ENCODE measurements at regions of chr3 and their contacts with region 1.

Region 1: DNA sequence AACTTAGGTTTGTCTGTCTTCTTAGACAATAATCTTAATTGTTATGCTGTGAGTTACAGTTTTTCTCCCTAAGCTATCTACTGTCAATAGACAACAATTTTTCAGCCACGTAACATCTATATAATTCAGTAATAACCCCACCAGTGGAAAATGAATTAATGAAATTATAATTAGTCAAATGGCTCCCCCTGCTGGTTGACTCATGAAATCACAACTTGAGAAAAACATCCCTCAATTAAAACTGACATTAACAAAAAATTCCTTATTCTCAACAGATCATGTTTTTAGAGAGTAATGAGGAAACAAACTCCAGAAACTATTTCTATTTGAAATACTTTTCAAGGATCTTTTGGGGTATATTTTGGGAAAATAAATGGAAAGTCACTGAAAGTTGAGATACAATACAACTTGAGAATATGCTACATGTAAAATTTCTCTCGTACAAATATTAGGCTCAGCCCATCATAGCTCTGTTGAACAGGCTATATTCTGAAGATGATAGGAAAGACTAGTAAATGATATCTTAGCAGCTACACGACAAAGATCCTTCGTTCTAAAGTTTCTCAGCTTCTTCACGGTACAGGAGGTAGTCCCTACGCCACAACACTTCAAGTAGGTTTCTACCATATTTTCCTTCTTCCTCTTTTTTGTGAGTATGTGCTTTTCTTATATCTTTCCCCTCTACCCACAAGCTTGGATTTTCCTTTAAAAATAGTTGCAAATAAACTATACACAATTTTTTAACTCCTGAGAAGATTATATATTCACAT is 20.7 kb downstream of the PPP1R2 start:
- DNase-seq: no peak
- H3K4me3 ChIP-seq: no peak overlapping the region
- H3K27ac ChIP-seq: peak overlapping the region in 2 of 8 donors; percentile 23 to 27
- H3K4me1 ChIP-seq: peaks cover 4 to 47% (median 31%) of the 10 kb centered on the region in 6 donors
- H3K27me3 ChIP-seq: no peaks in the 10 kb centered on the region
- CTCF ChIP-seq: peak; percentile 65 to 83 (median 79)
- POLR2A ChIP-seq: no peak

Region 2: DNA sequence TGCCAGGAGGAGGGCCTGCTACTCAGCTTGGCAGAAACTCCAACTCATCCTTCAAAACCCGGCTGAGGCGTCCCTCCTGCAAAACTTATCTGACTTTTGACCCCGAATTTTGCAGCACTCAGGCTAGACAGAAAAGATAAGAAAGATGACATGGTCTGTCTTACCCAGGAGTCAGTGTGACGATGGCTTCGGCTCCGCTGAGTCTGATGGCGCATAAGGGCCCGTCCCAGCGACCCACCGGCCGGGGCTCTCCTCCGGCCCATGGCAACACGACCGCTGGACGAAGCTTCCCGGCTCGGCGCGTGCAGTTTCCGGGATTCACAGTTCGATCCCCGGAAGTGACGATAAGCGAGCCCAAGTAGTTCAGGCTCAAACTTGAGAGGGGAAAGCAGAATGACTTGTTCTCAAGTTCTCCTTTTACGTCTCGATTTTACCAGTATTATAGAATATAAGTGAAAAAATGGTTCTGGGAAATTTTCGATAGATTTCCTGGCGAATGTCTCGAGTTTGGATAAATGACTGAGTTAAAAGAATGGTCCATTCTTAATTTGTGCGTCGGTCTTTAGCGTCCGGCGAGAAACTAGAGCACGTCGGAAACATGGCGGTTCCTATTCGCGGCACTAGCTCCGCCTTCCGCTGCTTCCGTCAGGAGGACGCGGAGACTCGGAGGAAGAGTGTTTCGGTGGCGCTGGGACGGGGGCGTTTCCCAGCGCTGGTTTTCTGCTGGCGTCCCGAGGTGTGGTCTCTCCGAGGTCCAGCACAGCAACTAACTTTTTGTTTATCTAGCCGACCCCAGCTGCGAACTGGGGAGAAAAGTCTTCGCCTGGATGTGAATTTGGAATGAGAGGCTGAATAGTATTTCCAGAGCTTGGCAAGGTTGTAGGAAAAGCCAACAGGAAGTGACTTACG is 850.3 kb before region 1 on chr3 and contains the start of gene LSG1:
- intact Hi-C with region 1: loop called (anchors 10 kb)
- DNase-seq: peak; percentile 96
- H3K4me3 ChIP-seq: peak within 1 kb of the TSS; percentile 82 to 95 (median 92)
- H3K27ac ChIP-seq: peak within 1 kb of the TSS; percentile 88 to 97 (median 92)
- H3K4me1 ChIP-seq: peaks cover 12 to 49% (median 25%) of the 10 kb centered on the region in 6 donors
- H3K27me3 ChIP-seq: no peaks in the 10 kb centered on the region
- CTCF ChIP-seq: no peak
- POLR2A ChIP-seq: peak in 2 of 3 donors; percentile 39 to 60
- total RNA-seq, gene LSG1: 33.1 to 58.0 (median 44.1) TPM

Region 3: DNA sequence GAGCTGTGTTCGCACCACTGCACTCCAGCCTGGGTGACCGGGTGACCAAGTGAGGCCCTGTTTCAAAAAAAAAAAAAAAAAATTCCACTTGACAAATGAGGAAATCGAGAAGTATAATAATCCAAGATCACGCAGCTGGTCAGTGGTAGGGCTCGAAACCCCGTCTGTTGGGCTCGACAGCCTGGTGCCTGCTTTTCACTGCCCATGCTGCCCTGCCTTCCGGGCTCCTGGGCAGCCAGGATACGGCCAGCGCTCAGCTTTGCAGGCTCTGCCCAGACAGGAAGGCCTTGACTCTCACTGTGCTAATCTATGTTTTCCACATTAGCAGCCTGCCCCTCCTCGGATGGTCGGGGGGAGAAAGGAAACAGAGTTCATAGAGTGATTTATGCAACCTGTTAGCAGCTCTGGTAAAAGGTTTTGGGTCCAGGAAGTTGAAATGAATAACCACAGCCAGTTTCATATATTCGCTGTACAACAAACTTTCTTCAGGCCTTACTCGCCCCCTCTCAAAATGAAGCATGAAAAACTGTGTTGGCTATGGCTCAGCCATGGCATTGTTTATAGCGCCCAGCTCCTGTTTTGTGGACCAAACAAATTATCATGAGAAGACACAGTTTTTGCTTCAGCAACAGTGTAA is 360.3 kb before region 1 on chr3:
- intact Hi-C with region 1: no loop called
- DNase-seq: peak; percentile 91
- H3K4me3 ChIP-seq: no peak overlapping the region
- H3K27ac ChIP-seq: peak overlapping the region; percentile 19 to 81 (median 74)
- H3K4me1 ChIP-seq: peaks cover 32 to 91% (median 67%) of the 10 kb centered on the region in 6 donors
- H3K27me3 ChIP-seq: no peaks in the 10 kb centered on the region
- CTCF ChIP-seq: no peak
- POLR2A ChIP-seq: no peak

Region 4: DNA sequence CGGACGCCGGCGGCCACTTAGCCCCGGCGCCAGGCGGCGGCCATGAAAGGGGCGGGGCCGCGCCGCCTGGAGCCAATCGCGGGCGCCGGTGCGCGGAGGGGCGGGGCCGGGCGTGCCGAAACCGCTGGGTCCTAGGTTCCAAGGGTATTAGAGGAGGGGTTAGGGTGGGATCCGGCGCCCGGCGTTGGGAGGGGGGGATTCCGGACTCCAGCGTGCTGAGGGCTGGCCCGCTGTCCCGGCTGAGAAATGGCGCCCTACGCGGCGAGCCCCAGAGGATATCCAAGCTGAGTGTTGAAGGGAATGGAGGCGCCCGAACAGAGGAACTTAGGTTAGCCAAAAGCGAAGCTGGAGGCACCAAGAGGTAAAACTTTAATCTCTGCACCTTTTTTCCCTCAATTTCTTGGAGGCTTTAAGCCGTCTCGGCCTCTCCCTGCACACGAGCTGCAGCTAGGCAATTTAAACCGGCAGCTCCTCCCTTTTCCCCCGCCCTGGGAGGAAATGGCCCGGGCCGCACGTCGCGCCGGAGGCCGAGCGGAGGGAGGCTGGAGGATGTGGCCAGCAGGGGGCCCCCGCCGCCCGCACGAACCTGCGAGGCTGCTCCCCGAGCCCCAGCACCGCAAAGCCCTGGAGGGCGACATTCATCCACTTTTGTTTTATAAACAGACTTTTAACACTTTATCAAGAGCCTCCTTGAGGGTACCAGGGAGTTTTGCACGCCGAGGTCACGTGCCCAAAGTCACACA is 251.2 kb before region 1 on chr3 and contains the start of gene XXYLT1:
- intact Hi-C with region 1: loop called (anchors 2 kb)
- DNase-seq: peak; percentile 98
- H3K4me3 ChIP-seq: peak within 1 kb of the TSS; percentile 90 to 100 (median 94)
- H3K27ac ChIP-seq: peak within 1 kb of the TSS; percentile 74 to 93 (median 89)
- H3K4me1 ChIP-seq: peaks cover 4 to 40% (median 28%) of the 10 kb centered on the region in 6 donors
- H3K27me3 ChIP-seq: no peaks in the 10 kb centered on the region
- CTCF ChIP-seq: peak; percentile 91 to 99 (median 98)
- POLR2A ChIP-seq: no peak
- total RNA-seq, gene XXYLT1: 7.7 to 22.3 (median 16.4) TPM

Region 5: GRCh38 chr3:195932456-195933430 is 410.3 kb after region 1 on chr3:
- intact Hi-C with region 1: no loop called
- DNase-seq: no peak
- H3K4me3 ChIP-seq: no peak overlapping the region
- H3K27ac ChIP-seq: no peak overlapping the region
- H3K4me1 ChIP-seq: no peaks in the 10 kb centered on the region
- H3K27me3 ChIP-seq: no peaks in the 10 kb centered on the region
- CTCF ChIP-seq: no peak
- POLR2A ChIP-seq: no peak

Measured in spleen (tissue), 13 donors.